Activated CD4-positive, alpha-beta T cell treated with anti-CD3 and anti-CD28 coated beads, Interleukin-2, amount 10 ng/mL, durations not matched to agents 24 days and 14 days (primary cell): ENCODE measurements at regions of chr12 and their contacts with region 1.

Region 1: GRCh38 chr12:55899082-55899481 is 28.6 kb downstream of the PYM1 start:
- DNase-seq: no peak
- H3K4me3 Mint-ChIP-seq: no peak overlapping the region
- H3K27ac Mint-ChIP-seq: peak overlapping the region; percentile 45
- H3K4me1 Mint-ChIP-seq: peaks cover 9% of the 10 kb centered on the region
- H3K27me3 Mint-ChIP-seq: no peaks in the 10 kb centered on the region

Region 2: GRCh38 chr12:55847603-55848291 is 51.3 kb before region 1 on chr12:
- intact Hi-C with region 1: loop called (anchors 5 kb)
- DNase-seq: no peak
- H3K4me3 Mint-ChIP-seq: no peak overlapping the region
- H3K27ac Mint-ChIP-seq: peak overlapping the region; percentile 31
- H3K4me1 Mint-ChIP-seq: peaks cover 10% of the 10 kb centered on the region
- H3K27me3 Mint-ChIP-seq: peaks cover 18% of the 10 kb centered on the region

Region 3: DNA sequence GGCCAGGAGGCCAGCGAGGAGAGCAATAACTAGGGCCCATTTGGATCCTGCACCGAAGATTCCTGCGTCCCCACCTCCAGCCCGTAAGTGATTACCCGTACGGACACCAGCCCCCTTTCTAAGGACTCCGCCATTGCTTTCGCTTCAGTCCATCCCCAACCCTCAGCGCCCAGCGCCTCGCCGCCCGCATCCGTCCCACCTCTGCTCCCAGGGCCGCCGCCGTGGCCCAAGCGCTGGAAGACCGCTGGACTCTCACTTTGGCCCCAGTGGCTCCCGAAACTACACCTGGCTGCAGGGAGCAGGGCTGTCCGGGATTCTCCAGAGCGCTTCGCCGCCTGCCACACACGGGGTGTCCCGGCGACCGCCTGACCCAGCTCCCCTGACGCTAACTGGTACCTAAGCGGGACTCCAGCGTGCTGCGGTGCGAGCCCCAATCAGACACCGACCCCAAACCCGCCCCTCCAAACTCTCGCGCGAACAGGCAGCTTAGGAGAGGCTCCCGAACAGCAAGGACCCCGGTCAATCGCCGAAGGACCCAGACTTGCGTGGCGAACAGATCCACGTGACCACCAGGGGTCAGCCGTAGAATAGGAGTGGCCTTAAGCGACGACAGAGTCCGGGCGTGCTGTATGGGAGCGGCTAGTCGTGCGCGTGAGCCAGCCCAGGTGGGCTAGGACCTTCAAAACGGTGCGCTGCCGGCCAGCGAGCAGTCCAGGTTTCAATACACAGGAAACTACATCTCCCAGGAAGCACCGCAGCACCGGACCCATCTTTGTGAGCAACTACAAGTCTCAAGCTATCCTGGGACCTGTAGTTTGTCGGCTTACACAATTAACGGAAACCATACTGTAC is 416.8 kb after region 1 on chr12 and contains the start of gene CNPY2:
- intact Hi-C with region 1: no loop called
- DNase-seq: peak; percentile 97
- H3K4me3 Mint-ChIP-seq: peak within 1 kb of the TSS; percentile 97
- H3K27ac Mint-ChIP-seq: peak within 1 kb of the TSS; percentile 98
- H3K4me1 Mint-ChIP-seq: peaks cover 7% of the 10 kb centered on the region
- H3K27me3 Mint-ChIP-seq: no peaks in the 10 kb centered on the region
- total RNA-seq, gene CNPY2: 165 and 169 TPM in 2 replicates